Naive thymus-derived CD4-positive, alpha-beta T cell (primary cell): ENCODE measurements at regions of chr10 and their contacts with region 1.

Region 1: DNA sequence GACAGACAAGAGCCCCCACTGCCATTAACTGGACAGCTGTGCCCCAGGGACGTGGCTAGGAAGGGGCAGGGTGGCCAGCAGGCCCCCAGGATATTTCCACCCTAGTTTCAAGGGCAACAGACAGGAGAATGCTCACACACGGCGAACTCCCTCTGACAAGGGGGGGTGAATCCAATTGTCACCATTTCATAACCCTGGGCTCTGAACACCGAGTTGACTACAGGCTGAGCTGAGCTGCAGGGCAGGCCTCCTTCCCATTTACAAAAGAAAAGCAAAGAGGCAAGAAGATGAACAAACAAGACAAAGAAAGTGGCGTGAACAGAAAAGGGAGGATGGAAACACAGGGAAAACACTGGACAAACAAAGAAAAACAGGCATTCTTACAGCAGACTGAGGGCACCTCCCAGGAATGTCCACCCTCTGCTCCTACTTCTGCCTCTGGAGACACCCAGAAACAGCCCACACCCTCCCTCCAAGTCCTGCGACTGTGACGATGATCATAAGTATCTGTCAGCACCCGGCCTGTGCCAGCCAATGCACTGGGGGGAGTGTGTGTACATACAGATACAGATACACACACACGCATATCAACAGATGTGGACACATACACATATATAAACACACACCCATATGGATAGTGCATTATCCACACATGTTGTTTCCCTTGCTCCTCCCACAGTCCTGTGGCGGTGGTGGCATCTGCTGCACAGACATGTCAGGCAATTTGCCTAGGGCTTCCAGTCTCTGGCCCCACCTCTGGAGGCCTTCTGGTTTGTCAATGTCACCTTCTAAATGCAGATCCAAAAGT is 66.2 kb downstream of the FAM53B start:
- DNase-seq: no peak
- ATAC-seq: no peak
- H3K4me3 ChIP-seq: peak overlapping the region; percentile 37
- H3K4me3 Mint-ChIP-seq: peak overlapping the region; percentile 70 to 93 (median 81)
- H3K27ac ChIP-seq: peak overlapping the region; percentile 47
- H3K27ac Mint-ChIP-seq: peak overlapping the region; percentile 79 to 97 (median 91)
- H3K4me1 ChIP-seq: peaks cover 77 to 91% of the 10 kb centered on the region in 2 donors
- H3K4me1 Mint-ChIP-seq: peaks cover 53 to 94% (median 85%) of the 10 kb centered on the region in 7 donors
- H3K27me3 ChIP-seq: no peaks in the 10 kb centered on the region
- H3K27me3 Mint-ChIP-seq: no peaks in the 10 kb centered on the region

Region 2: GRCh38 chr10:124590216-124591122 is 87.5 kb before region 1 on chr10:
- CTCF ChIA-PET with region 1: no interaction called
- POLR2A ChIA-PET with region 1: no interaction called
- intact Hi-C with region 1: no loop called
- DNase-seq: no peak
- ATAC-seq: no peak
- H3K4me3 ChIP-seq: no peak overlapping the region
- H3K4me3 Mint-ChIP-seq: no peak overlapping the region
- H3K27ac ChIP-seq: no peak overlapping the region
- H3K27ac Mint-ChIP-seq: no peak overlapping the region
- H3K4me1 ChIP-seq: no peaks in the 10 kb centered on the region
- H3K4me1 Mint-ChIP-seq: peaks cover 0 to 5% (median 0%) of the 10 kb centered on the region in 7 donors
- H3K27me3 ChIP-seq: no peaks in the 10 kb centered on the region
- H3K27me3 Mint-ChIP-seq: peaks cover 0 to 2% (median 0%) of the 10 kb centered on the region in 5 donors

Region 3: DNA sequence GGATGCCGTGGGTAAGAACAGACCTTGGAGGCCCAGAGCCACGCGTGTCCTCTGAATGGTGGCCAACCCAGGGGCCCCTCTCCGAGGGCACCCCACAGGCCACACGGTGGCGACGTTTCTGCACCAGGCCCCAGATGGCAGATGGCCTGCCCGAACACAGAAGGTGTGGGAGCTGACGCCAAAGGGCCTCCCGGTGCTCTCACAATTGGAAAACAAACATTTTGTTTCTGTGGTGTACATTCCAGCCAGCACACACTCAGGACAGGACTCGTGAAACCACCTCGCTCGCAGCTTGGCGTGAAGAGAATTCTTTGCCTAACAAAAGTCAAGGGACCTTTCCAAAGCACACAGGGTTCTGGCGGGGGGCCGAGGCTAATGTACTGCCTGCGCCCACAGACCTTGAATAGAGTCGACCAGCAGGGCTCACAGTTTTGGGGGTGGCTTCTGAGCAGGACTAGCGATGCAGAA is 45.9 kb before region 1 on chr10:
- CTCF ChIA-PET with region 1: interaction called, 5 read pairs
- POLR2A ChIA-PET with region 1: interaction called, 3 read pairs
- intact Hi-C with region 1: loop called in 1 of 2 experiments (anchors 5 kb)
- DNase-seq: peak in 2 of 9 donors; percentile 36 to 51
- ATAC-seq: peak; percentile 43
- H3K4me3 ChIP-seq: no peak overlapping the region
- H3K4me3 Mint-ChIP-seq: peak overlapping the region in 1 of 10 donors; percentile 7
- H3K27ac ChIP-seq: no peak overlapping the region
- H3K27ac Mint-ChIP-seq: peak overlapping the region in 2 of 9 donors; percentile 40 to 53
- H3K4me1 ChIP-seq: peaks cover 25 to 47% of the 10 kb centered on the region in 2 donors
- H3K4me1 Mint-ChIP-seq: peaks cover 29 to 78% (median 67%) of the 10 kb centered on the region in 7 donors
- H3K27me3 ChIP-seq: no peaks in the 10 kb centered on the region
- H3K27me3 Mint-ChIP-seq: peaks cover 0 to 8% (median 0%) of the 10 kb centered on the region in 5 donors

Region 4: GRCh38 chr10:124688889-124689670 is 11.1 kb after region 1 on chr10:
- CTCF ChIA-PET with region 1: interaction called, 5 read pairs
- POLR2A ChIA-PET with region 1: interaction called, 10 read pairs
- intact Hi-C with region 1: loop called in 1 of 2 experiments (anchors 1 kb)
- DNase-seq: peak in 1 of 9 donors; percentile 61
- ATAC-seq: peak; percentile 87
- H3K4me3 ChIP-seq: no peak overlapping the region
- H3K4me3 Mint-ChIP-seq: peak overlapping the region in 1 of 10 donors; percentile 69
- H3K27ac ChIP-seq: no peak overlapping the region
- H3K27ac Mint-ChIP-seq: peak overlapping the region in 6 of 9 donors; percentile 15 to 88 (median 30)
- H3K4me1 ChIP-seq: peaks cover 24 to 90% of the 10 kb centered on the region in 2 donors
- H3K4me1 Mint-ChIP-seq: peaks cover 39 to 73% (median 49%) of the 10 kb centered on the region in 7 donors
- H3K27me3 ChIP-seq: no peaks in the 10 kb centered on the region
- H3K27me3 Mint-ChIP-seq: no peaks in the 10 kb centered on the region

Region 5: DNA sequence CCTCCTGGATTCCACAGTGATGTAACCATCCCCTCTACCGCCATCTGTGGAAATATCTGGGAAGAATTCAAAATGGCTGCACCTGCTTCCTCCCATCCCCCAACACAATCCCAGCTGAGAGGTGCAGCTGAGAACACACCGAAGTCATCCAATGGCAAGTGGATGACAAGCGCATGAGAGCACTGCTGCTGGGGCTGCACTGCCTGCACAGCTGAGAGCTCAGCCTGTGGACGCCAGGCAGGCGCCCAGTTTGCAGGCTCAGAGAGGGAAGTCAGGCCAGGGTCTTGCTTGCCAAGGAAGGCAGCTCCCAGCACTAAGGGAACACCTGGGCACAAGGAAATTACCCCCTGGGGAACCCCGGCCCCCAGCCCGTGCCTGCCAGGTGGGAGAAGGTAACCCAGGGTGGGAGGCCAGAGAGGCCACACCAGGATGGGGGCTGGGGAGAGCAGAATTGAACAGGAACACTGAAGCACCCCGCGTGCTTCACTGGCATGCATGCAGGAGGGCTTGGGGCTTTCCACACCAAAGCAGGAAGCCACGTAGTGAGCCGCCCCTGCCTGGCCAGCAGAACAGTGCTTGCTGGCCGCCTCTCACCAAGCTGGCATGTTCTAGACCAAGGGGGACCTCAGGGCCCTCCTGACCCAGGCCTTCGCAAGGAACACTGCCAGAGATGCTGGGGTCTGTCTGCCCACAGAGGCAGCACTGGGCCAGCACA is 20.0 kb after region 1 on chr10:
- CTCF ChIA-PET with region 1: interaction called, 12 read pairs
- POLR2A ChIA-PET with region 1: interaction called, 12 read pairs
- intact Hi-C with region 1: loop called in 1 of 2 experiments (anchors 1 kb)
- DNase-seq: peak in 4 of 9 donors; percentile 12 to 50 (median 41)
- ATAC-seq: peak; percentile 68
- H3K4me3 ChIP-seq: no peak overlapping the region
- H3K4me3 Mint-ChIP-seq: peak overlapping the region in 9 of 10 donors; percentile 53 to 82 (median 73)
- H3K27ac ChIP-seq: peak overlapping the region; percentile 67
- H3K27ac Mint-ChIP-seq: peak overlapping the region; percentile 84 to 97 (median 91)
- H3K4me1 ChIP-seq: peaks cover 66 to 90% of the 10 kb centered on the region in 2 donors
- H3K4me1 Mint-ChIP-seq: peaks cover 73 to 96% (median 94%) of the 10 kb centered on the region in 7 donors
- H3K27me3 ChIP-seq: no peaks in the 10 kb centered on the region
- H3K27me3 Mint-ChIP-seq: no peaks in the 10 kb centered on the region